ENCODE measurements at regions of chr18 and their contacts with region 1.

Region 1: DNA sequence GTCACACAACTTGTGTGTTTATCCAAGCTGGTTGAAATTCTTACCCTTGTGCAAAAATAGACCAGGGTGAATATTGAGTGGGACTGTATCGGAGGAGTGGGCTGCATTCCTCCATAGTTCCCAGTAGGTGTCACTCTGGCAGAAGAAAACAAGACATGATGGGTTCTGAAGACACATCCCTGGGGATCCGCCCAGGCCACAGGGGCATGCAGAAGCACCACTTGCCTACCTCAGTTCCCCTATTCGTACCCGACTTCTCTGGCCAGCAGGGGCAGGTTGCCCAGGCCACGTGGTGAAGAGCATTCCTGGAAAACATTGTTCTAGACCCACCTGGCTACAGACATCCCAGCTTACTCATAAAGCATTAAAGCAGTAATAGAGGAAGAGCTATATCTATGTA is 168.2 kb downstream of the FAM210A start:
- DNase-seq: peak; percentile 59
- ATAC-seq: peak; percentile 81 to 83

Region 2: DNA sequence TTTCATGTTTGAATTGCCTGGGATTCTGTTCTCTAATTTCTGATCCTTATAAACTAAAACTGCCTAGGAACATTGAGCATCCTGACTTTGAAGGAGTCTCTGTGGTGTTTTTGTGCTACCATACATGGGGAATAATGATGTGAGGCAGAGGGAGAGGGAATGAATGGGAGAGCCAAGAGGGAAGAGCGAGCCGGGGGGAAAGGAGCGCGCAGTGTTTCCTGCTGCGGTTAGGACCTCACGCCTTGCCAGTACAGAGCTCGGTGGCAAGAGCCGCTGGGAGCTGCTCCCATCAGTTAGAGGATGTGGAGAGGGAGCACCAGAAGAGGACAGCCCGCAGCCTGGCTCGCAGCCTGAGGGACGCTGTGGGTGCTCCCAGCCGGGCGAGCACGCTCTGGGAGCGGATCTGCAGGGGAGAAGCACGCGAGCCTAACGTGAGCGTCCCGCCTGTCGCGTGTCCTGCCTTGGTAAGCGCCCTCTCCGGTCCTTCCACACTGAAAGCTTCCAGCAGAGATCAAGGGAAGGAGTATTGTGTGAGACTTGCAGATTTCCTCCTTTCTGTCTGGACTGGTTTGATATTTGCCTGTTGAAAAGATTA is 53.6 kb after region 1 on chr18:
- intact Hi-C with region 1: loop called in 1 of 2 experiments (anchors 2 kb)
- DNase-seq: peak; percentile 74
- ATAC-seq: peak; percentile 80 to 83

Region 3: GRCh38 chr18:13629841-13630715 is 72.0 kb after region 1 on chr18:
- intact Hi-C with region 1: loop called (anchors 5 kb)
- DNase-seq: peak; percentile 65
- ATAC-seq: peak; percentile 89 to 92

Region 4: DNA sequence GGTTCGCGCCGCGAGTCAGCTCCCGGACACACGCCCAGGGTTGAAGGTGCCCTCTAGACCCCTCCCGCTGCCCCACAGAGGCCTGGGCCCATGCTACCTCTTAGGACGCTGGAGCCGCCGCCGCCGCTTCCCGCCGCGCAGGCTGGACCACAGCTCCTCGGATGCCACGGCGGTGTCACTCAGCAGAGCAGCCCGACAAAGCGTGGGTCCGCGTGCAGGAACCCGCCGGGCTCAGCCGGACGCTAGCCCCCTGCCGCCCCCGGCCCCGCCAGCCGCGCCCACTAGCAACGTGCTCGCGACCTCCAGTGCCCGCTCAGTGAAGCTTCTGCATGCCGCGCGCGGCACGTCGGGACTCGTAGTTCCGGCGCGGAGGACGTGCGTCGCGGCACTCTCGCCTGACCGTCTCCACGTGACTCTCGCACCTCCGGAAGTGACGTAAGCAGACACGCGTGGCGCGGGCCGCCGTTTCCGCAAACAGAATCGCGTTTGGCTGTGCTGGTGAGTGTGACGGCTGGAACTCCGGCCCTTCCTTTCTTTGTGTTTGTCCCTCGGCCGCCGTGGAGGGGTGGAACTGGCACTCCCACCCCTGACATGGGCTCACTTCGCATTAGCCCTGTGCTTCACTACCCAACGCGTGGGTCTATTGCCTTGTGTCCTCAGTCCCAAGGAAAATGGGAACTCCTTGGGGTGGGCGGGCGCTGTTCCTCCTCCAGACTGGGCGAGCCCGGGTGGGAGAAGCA is 168.3 kb after region 1 on chr18 and contains the starts of genes FAM210A and RNMT:
- intact Hi-C with region 1: loop called (anchors 5 to 10 kb)
- DNase-seq: peak; percentile 98
- ATAC-seq: peak; percentile 98
- total RNA-seq, gene FAM210A: 39.7 to 58.4 TPM
- total RNA-seq, gene RNMT: 21.9 to 39.1 TPM

Region 5: DNA sequence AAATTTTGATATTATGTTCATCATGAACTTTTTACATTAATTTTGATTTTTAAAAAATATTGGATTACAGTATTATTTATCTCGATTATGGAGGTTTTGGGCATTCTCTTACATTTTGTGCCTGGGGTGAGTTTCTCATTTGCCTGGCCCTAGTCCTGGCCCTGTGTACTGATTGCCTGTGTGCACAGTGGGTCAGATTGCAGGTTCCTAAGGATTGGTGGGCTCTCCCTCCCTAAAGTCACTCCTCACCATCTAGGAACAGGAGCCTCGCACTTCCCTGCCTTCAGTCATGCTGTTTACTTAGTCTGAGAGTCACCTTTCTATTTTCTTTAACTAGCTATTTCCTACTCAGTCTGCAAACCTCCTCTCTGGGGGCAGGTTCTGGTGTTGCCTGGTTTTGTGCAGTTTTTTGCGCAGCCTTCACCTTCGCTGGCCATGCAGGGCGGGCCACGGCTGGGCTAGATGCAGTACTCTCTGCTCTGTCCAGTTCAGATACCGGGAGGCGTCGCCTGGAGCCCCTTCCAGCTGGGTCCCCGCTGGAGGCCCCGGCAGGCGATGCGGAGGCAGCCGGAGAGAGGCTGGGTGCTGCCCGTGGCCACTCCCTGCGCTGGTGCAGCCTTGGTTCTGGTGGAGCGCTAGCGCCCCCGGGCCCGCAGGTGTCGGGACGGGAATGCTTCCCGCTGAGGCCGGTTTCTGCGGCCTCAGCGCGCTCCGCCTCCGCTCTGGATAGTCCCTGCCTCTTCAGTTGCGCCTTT is 242.6 kb after region 1 on chr18:
- intact Hi-C with region 1: loop called in 1 of 2 experiments (anchors 10 kb)
- DNase-seq: peak; percentile 82
- ATAC-seq: peak; percentile 94 to 99

Measured in left cardiac atrium (tissue), 4 donors.